Heart right ventricle (tissue), 16 donors: ENCODE measurements at regions of chr4 and their contacts with region 1.

Region 1: DNA sequence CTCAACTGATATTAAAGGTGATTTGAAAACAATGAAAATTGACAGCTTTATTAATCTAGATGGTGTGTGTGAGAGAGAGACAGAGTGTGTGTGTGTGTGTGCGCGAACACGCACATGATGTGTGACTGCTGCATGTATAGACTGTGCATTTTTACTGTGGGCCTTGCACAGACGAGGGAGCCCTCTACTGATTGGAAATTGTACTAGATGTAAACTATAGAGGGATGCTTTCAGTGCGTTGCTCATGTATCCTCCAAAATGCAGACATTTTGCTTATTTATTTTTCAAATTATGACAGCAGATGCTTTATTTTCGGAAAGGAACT is 168.4 kb upstream of the GK2 start:
- DNase-seq: no peak
- ATAC-seq: peak; percentile 40 to 83 (median 68)
- H3K4me3 ChIP-seq: no peak overlapping the region
- H3K27ac ChIP-seq: peak overlapping the region in 1 of 10 donors; percentile 41
- H3K4me1 ChIP-seq: peaks cover 0 to 13% (median 0%) of the 10 kb centered on the region in 9 donors
- H3K27me3 ChIP-seq: no peaks in the 10 kb centered on the region
- CTCF ChIP-seq: peak; percentile 9 to 68 (median 49)

Region 2: DNA sequence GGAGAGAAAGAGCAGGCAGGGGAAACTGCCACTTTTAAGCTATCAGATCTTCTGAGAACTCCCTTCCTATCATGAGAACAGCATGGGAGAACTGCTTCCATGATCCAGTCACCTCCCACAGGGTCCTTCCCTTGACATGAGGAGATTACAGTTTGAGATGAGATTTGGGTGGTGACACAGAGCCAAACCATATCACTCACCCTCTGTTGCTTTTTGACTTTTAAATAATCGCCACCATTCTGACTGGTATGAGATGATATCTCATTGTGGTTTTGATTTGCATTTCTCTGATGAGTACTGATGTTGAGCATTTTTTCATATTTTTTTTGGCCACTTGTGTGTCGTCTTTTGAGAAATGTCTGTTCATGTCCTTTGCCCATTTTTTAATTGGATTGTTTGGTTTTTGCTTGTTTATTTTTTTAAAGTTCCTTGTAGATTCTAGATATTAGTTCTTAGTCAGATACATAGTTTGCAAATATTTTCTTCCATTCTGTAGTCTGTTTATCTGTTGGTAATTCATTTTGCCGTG is 630.7 kb before region 1 on chr4:
- intact Hi-C with region 1: loop called in 7 of 10 experiments (anchors 5 to 10 kb)
- DNase-seq: no peak
- ATAC-seq: no peak
- H3K4me3 ChIP-seq: no peak overlapping the region
- H3K27ac ChIP-seq: no peak overlapping the region
- H3K4me1 ChIP-seq: peaks cover 0 to 9% (median 0%) of the 10 kb centered on the region in 9 donors
- H3K27me3 ChIP-seq: peaks cover 0 to 3% (median 0%) of the 10 kb centered on the region in 7 donors
- CTCF ChIP-seq: no peak

Region 3: GRCh38 chr4:79042079-79042674 is 534.2 kb before region 1 on chr4:
- intact Hi-C with region 1: loop called in 9 of 10 experiments (anchors 1 to 10 kb)
- DNase-seq: peak in 1 of 2 donors; percentile 10
- ATAC-seq: peak in 2 of 8 donors; percentile 45 to 61
- H3K4me3 ChIP-seq: no peak overlapping the region
- H3K27ac ChIP-seq: no peak overlapping the region
- H3K4me1 ChIP-seq: peaks cover 0 to under 1% (median 0%) of the 10 kb centered on the region in 9 donors
- H3K27me3 ChIP-seq: no peaks in the 10 kb centered on the region
- CTCF ChIP-seq: peak in 8 of 9 donors; percentile 30 to 71 (median 56)

Region 4: DNA sequence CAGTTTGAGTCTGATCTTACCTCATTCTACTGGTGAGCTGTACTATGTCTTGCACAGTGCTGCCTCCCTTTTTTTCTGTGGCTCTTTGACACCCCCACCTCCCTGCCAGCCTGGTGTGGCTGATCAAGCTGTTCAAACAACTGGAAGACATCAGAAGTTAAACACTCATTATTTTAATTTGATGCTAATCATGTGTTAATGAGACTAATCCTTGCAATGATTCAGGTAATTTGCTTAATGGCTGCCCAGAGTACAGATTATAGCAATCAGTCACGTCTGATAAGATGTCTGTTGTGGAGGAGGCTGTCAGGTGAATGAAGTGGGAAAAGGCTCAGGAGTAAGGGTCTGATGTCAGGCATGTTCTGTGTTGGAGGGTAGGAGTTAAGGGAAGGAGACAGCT is 80.9 kb before region 1 on chr4:
- intact Hi-C with region 1: loop called in 1 of 10 experiments (anchors 5 kb)
- DNase-seq: no peak
- ATAC-seq: no peak
- H3K4me3 ChIP-seq: peak overlapping the region in 7 of 10 donors; percentile 0 to 39 (median 25)
- H3K27ac ChIP-seq: peak overlapping the region in 2 of 10 donors; percentile 8 to 57
- H3K4me1 ChIP-seq: peaks cover 0 to 4% (median 0%) of the 10 kb centered on the region in 9 donors
- H3K27me3 ChIP-seq: no peaks in the 10 kb centered on the region
- CTCF ChIP-seq: no peak

Region 5: GRCh38 chr4:79673898-79674297 is 97.5 kb after region 1 on chr4:
- intact Hi-C with region 1: no loop called
- DNase-seq: no peak
- ATAC-seq: no peak
- H3K4me3 ChIP-seq: no peak overlapping the region
- H3K27ac ChIP-seq: no peak overlapping the region
- H3K4me1 ChIP-seq: no peaks in the 10 kb centered on the region
- H3K27me3 ChIP-seq: no peaks in the 10 kb centered on the region
- CTCF ChIP-seq: no peak